Common myeloid progenitor, CD34-positive (primary cell): ENCODE measurements at regions of chr1 and their contacts with region 1.

Region 1: DNA sequence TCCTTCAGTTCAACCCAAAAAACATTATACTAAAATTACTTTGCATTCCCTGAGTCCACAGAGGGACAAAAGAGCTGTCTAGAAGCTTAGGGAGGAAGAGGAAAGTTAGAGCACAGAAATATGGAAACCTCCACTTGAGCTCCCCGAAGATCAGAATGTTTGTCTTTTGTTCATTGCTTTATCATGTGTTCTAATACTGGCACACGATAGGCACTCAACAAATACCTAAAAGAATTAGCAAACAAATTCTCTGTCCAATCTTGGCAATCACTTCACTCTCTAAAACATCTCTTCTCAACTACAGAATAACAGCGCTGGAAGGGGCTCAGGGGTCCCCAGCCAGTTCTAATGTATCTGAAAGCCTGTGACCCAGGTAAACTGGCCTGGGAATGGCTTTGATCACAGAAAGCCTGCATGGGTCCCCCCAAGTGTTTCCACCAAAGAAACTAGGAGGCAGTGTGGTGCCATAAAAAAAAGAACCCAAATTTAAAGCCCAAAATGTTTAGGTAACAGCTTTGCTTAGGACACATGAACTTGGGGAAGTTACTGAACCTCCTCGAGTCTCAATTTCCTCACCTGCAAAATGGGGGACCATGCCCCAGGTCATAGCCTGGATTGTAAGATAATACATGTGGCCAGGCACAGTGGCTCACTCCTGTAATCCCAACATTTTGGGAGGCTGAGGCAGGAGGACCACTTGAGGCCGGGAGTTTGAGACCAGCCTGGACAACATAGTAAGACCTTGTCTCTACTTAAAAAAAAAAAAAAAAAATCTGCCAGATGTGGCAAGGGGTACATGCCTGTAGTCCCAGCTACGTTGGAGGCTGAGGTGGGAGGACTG is 45.8 kb downstream of the SSBP3 start:
- DNase-seq: peak in 2 of 3 donors; percentile 31 to 39
- H3K4me3 ChIP-seq: no peak overlapping the region
- H3K27ac ChIP-seq: no peak overlapping the region
- H3K4me1 ChIP-seq: peaks cover 3 to 45% (median 38%) of the 10 kb centered on the region in 4 experiments
- H3K27me3 ChIP-seq: no peaks in the 10 kb centered on the region

Region 2: DNA sequence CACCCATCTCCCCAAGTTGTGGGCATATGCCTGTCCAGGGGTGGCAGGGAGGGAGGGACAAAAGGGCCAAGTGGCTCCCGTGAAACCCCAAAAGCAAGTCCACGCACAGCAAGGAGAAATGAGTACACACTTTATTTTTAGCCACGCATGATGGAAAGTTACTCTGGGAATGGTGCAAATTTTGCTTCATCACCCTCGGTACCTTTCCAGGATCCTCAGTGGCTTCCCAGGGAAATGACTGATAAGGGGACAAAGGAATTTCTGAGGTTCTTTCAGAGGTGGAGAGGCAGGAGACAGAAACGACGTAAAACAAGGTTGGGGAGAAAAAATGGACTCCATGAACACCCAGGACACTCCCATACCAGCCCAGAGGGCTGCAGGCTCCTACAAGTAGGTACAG is 20.0 kb before region 1 on chr1:
- CTCF ChIA-PET with region 1: no interaction called
- POLR2A ChIA-PET with region 1: no interaction called
- DNase-seq: no peak
- H3K4me3 ChIP-seq: no peak overlapping the region
- H3K27ac ChIP-seq: no peak overlapping the region
- H3K4me1 ChIP-seq: peaks cover 0 to 24% (median 5%) of the 10 kb centered on the region in 4 experiments
- H3K27me3 ChIP-seq: no peaks in the 10 kb centered on the region

Region 3: GRCh38 chr1:54371037-54371941 is 10.9 kb after region 1 on chr1:
- CTCF ChIA-PET with region 1: interaction called, 16 read pairs
- POLR2A ChIA-PET with region 1: no interaction called
- DNase-seq: no peak
- H3K4me3 ChIP-seq: no peak overlapping the region
- H3K27ac ChIP-seq: peak overlapping the region in 1 of 2 experiments; percentile 62
- H3K4me1 ChIP-seq: peaks cover 4 to 51% (median 45%) of the 10 kb centered on the region in 4 experiments
- H3K27me3 ChIP-seq: no peaks in the 10 kb centered on the region